ENCODE measurements at regions of chr11 and their contacts with region 1.

Region 1: DNA sequence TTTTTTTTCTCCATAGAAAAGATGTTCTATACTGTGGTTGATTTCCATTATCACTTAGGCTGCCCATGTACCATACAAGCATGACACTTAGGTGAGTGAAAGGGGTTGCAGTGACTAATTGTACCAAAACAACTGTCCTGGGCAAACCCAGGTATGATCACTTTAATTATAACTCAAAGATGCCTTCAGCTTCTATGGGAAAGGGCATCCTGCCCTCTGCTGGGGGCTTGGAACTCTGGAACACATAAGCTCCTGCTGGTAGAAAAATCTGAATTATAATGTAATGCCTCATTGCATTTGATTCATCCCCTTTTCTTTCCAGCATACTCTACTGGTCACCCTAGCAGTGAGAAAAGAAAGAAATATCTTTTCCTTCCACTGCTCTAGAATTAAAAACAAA is 206.3 kb downstream of the DDX10 start:
- DNase-seq: peak; percentile 29
- H3K4me3 Mint-ChIP-seq: no peak overlapping the region
- H3K27ac Mint-ChIP-seq: no peak overlapping the region
- H3K4me1 Mint-ChIP-seq: peaks cover 11% of the 10 kb centered on the region
- H3K27me3 Mint-ChIP-seq: no peaks in the 10 kb centered on the region
- CTCF ChIP-seq: no peak

Region 2: GRCh38 chr11:108697872-108698473 is 173.2 kb before region 1 on chr11:
- CTCF ChIA-PET with region 1: interaction called, 4 read pairs
- intact Hi-C with region 1: loop called (anchors 1 kb)
- DNase-seq: peak; percentile 34
- H3K4me3 Mint-ChIP-seq: no peak overlapping the region
- H3K27ac Mint-ChIP-seq: no peak overlapping the region
- H3K4me1 Mint-ChIP-seq: no peaks in the 10 kb centered on the region
- H3K27me3 Mint-ChIP-seq: no peaks in the 10 kb centered on the region
- CTCF ChIP-seq: peak; percentile 38

Region 3: DNA sequence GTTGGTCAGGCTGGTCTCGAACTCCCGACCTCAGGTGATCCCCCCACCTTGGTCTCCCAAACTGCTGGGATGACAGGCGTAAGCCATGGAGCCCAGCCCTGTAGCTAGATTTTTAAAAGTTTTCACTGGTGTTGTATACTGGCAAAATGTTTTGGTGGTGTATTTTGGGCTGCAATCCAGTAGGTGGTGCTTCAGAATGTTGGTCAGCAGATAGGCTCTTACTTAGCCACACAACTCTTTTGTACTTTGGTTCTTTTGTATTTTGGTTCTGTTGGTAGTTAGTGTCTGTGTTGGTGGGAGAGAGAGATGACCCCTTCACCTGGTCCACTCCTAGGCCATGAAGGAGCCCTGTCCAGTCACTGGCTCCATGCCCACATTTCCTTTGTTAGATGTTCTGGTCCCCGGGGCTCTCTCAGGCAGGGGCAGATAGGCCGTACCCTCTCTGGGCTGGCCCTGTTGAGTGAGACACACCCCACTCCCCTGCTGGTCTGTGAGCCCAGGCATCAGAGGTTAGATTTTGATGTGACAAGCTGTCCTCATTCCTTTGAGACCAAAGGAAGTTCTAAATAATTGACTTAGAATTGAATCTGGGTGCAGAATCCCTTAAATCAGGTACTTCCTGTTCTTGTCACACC is 82.5 kb before region 1 on chr11:
- CTCF ChIA-PET with region 1: no interaction called
- intact Hi-C with region 1: loop called (anchors 10 kb)
- DNase-seq: peak; percentile 6
- H3K4me3 Mint-ChIP-seq: no peak overlapping the region
- H3K27ac Mint-ChIP-seq: no peak overlapping the region
- H3K4me1 Mint-ChIP-seq: peaks cover 36% of the 10 kb centered on the region
- H3K27me3 Mint-ChIP-seq: no peaks in the 10 kb centered on the region
- CTCF ChIP-seq: no peak

Region 4: DNA sequence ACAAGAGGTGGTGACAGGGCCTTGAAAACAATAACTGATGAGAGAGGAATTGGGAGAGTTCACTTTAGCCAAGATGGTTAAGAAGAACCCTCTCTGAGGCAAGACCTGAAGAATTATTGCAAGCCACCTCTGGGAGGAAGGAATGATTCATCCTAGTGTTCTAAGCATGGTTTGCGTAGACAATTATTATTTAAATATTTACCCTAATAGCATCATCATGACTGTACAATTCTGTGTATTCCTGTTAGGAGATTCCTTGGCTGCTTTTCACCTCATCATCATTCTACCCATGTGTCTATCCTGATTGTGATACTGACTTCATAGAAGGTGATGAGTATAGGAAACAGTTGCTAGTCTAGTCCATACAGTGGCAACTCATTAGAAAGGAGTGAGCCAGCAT is 58.1 kb after region 1 on chr11:
- CTCF ChIA-PET with region 1: no interaction called
- intact Hi-C with region 1: no loop called
- DNase-seq: no peak
- H3K4me3 Mint-ChIP-seq: no peak overlapping the region
- H3K27ac Mint-ChIP-seq: peak overlapping the region; percentile 45
- H3K4me1 Mint-ChIP-seq: peaks cover 9% of the 10 kb centered on the region
- H3K27me3 Mint-ChIP-seq: no peaks in the 10 kb centered on the region
- CTCF ChIP-seq: no peak